MCF 10A (cell line): ENCODE measurements at regions of chr1 and their contacts with region 1.

Region 1: DNA sequence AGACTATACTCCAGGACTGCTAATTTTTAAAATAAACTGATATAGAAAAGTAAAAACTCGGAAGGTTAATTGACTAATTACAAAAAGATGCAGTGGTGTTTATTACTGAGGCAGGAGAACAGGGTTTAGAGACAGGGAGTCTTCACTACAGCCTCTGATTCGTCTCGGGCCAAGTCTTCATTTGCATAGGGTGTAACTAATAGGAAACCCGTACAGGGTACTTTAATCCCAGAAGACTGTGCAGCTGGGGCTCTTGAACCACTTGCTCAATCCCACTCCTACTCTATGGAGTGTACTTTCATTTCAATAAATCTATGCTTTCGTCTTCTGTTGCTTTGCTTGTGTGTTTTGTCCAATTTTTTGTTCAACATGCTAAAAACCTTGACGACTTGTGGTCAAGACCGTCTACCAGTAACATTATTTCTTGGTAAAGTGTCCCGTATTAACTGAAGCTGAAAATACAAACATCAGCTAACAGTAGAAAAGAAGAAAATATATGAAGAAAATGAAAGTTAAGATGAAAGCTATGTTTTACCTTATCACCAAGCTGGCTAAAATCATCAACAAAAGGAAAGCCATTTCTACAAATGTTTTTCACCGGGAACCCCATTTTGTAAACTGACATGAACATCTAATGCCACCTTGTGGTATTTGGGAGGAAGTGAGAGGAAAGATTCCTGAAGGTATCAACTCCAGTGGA is 8.0 kb downstream of the SDHB start:
- DNase-seq: peak; percentile 71
- H3K4me3 Mint-ChIP-seq: no peak overlapping the region
- H3K27ac Mint-ChIP-seq: peak overlapping the region; percentile 72
- H3K4me1 Mint-ChIP-seq: peaks cover 11% of the 10 kb centered on the region
- H3K27me3 Mint-ChIP-seq: no peaks in the 10 kb centered on the region
- CTCF ChIP-seq: peak; percentile 75

Region 2: DNA sequence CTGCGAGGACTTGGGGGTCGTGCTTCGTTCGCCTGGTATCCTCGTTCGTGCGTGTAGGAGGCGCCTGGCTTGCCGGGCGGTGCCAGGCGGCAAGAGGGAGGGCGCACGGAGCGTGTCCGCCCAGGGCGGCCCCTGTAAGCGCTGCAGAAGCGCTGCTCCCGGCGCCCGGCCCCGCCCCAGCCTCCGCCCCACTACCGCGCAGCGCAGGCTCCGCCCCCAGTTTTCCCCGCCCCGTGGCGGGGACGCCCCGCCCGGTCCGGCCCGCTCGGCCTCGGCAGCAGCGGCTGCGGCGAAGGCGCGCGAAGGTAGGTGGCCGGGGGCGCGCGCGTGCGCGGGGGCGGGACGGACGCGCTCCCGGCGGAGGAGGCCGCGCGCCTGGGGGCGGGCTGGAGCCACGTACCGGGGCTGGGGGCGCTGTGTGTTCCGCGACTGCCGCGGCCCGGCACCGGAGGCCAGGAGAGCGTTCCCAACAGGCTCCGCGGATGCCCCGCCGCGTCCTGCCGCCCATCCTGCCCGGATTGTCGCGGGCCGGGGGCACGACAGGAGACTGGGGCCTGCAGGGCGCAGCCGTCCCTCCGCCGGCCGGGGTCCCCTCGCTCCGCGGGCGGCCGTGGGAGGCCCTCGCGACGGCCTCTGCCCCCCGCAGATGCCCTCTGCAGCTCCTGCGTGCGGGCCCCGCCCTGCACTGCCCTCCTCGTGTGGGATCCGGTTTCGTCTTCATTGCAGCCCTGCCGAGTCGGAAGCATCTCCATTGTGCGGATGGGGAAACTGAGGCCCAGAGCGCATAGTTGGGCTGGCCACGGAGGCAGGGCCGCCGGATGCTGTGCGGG is 131.7 kb before region 1 on chr1:
- CTCF ChIA-PET with region 1: interaction called, 4 read pairs
- POLR2A ChIA-PET with region 1: no interaction called
- intact Hi-C with region 1: loop called (anchors 5 kb)
- DNase-seq: peak; percentile 89
- H3K4me3 Mint-ChIP-seq: peak overlapping the region; percentile 77
- H3K27ac Mint-ChIP-seq: peak overlapping the region; percentile 80
- H3K4me1 Mint-ChIP-seq: peaks cover 18% of the 10 kb centered on the region
- H3K27me3 Mint-ChIP-seq: no peaks in the 10 kb centered on the region
- CTCF ChIP-seq: peak; percentile 10

Region 3: DNA sequence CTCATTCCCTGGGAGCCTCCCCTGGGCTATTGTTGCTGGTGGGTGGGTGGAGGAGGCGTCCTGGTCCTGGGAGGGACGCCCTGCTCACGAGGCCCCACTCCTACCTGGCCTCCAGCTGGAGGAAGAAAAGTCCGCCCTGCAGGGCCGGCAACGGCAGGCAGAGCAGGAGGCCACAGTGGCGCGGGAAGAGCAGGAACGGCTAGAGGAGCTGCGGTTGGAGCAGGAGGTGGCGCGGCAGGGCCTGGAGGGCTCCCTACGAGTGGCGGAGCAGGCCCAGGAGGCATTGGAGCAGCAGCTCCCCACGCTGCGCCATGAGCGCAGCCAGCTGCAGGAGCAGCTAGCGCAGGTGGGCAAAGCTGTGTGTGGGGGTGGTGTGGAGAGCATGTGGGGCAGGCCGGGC is 99.1 kb before region 1 on chr1:
- CTCF ChIA-PET with region 1: interaction called, 44 read pairs
- POLR2A ChIA-PET with region 1: interaction called, 3 read pairs
- intact Hi-C with region 1: loop called (anchors 1 kb)
- DNase-seq: no peak
- H3K4me3 Mint-ChIP-seq: no peak overlapping the region
- H3K27ac Mint-ChIP-seq: no peak overlapping the region
- H3K4me1 Mint-ChIP-seq: peaks cover 5% of the 10 kb centered on the region
- H3K27me3 Mint-ChIP-seq: no peaks in the 10 kb centered on the region
- CTCF ChIP-seq: no peak

Region 4: GRCh38 chr1:17011439-17012307 is 34.1 kb before region 1 on chr1 and contains the start of gene ATP13A2:
- CTCF ChIA-PET with region 1: interaction called, 5 read pairs
- POLR2A ChIA-PET with region 1: no interaction called
- intact Hi-C with region 1: loop called (anchors 5 kb)
- DNase-seq: peak; percentile 75
- H3K4me3 Mint-ChIP-seq: peak within 1 kb of the TSS; percentile 76
- H3K27ac Mint-ChIP-seq: peak within 1 kb of the TSS; percentile 42
- H3K4me1 Mint-ChIP-seq: peaks cover 18% of the 10 kb centered on the region
- H3K27me3 Mint-ChIP-seq: no peaks in the 10 kb centered on the region
- CTCF ChIP-seq: no peak
- total RNA-seq, gene ATP13A2: 59.4 and 61.3 TPM in 2 replicates

Region 5: GRCh38 chr1:17032741-17033140 is 13.0 kb before region 1 on chr1:
- CTCF ChIA-PET with region 1: interaction called, 56 read pairs
- POLR2A ChIA-PET with region 1: interaction called, 9 read pairs
- intact Hi-C with region 1: no loop called
- DNase-seq: no peak
- H3K4me3 Mint-ChIP-seq: no peak overlapping the region
- H3K27ac Mint-ChIP-seq: no peak overlapping the region
- H3K4me1 Mint-ChIP-seq: peaks cover 12% of the 10 kb centered on the region
- H3K27me3 Mint-ChIP-seq: no peaks in the 10 kb centered on the region
- CTCF ChIP-seq: no peak

Region 6: DNA sequence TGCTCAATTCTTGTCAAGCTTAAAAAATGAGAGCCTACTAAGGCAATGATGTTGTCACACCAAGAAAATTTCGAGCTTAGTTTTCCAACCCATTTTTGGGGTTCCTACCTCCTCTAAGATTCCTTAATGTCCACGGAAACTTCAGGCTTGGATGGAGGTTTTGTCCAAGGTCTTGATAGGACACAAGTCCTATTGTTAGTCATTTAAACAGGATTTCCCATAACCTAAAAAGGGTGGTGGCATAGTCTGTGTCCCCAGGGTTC is 84.3 kb after region 1 on chr1:
- CTCF ChIA-PET with region 1: no interaction called
- POLR2A ChIA-PET with region 1: no interaction called
- intact Hi-C with region 1: no loop called
- DNase-seq: no peak
- H3K4me3 Mint-ChIP-seq: no peak overlapping the region
- H3K27ac Mint-ChIP-seq: peak overlapping the region; percentile 25
- H3K4me1 Mint-ChIP-seq: peaks cover 8% of the 10 kb centered on the region
- H3K27me3 Mint-ChIP-seq: no peaks in the 10 kb centered on the region
- CTCF ChIP-seq: no peak